ENCODE measurements at regions of chr13 and their contacts with region 1.

Region 1: GRCh38 chr13:98869408-98870090 is 108.3 kb downstream of the DOCK9 start:
- DNase-seq: no peak
- H3K4me3 Mint-ChIP-seq: no peak overlapping the region
- H3K27ac Mint-ChIP-seq: no peak overlapping the region
- H3K4me1 Mint-ChIP-seq: peaks cover 26% of the 10 kb centered on the region
- H3K27me3 Mint-ChIP-seq: no peaks in the 10 kb centered on the region

Region 2: DNA sequence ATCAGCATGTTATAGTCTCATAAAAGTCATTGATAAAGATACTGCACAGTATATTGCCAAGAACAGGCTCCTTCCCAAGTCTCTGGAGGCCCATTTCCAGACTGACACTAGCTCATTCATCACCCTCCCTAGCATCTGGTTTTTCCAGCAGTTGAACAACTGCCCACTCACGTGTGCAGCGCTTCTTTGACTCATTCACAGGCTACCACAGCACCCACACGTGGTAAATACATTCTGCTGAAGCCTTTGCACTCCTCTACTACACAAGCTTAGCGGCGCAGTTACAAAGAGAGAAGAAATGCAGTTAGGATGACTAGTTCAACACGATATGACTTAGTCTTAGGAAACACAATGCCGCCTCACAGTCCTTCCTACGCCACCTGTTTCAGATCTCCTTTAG is 20.6 kb after region 1 on chr13:
- CTCF ChIA-PET with region 1: interaction called, 11 read pairs
- DNase-seq: no peak
- H3K4me3 Mint-ChIP-seq: no peak overlapping the region
- H3K27ac Mint-ChIP-seq: no peak overlapping the region
- H3K4me1 Mint-ChIP-seq: peaks cover 9% of the 10 kb centered on the region
- H3K27me3 Mint-ChIP-seq: no peaks in the 10 kb centered on the region